ENCODE measurements at regions of chr17 and their contacts with region 1.

Region 1: GRCh38 chr17:32461853-32462617 is 17.7 kb downstream of the PSMD11 start:
- DNase-seq: peak; percentile 51
- ATAC-seq: peak; percentile 88
- H3K4me3 ChIP-seq: no peak overlapping the region
- H3K27ac ChIP-seq: no peak overlapping the region
- H3K4me1 ChIP-seq: peaks cover 4 to 5% of the 10 kb centered on the region in 2 experiments; a peak in 2 of 4 replicates
- H3K27me3 ChIP-seq: no peaks in the 10 kb centered on the region
- CTCF ChIP-seq: peak; percentile 53 to 78 (median 70)
- POLR2A ChIP-seq: no peak
- RAD21 ChIP-seq: peak; percentile 33; the same call in 1 of the 2 replicates

Region 2: GRCh38 chr17:32444308-32445073 is 17.5 kb before region 1 on chr17 and contains the start of gene PSMD11:
- CTCF ChIA-PET with region 1: interaction called, 30 read pairs
- POLR2A ChIA-PET with region 1: interaction called, 3 read pairs
- RAD21 ChIA-PET with region 1: no interaction called
- intact Hi-C with region 1: no loop called
- DNase-seq: peak; percentile 92
- ATAC-seq: peak; percentile 94
- H3K4me3 ChIP-seq: peak within 1 kb of the TSS; percentile 58 to 96
- H3K27ac ChIP-seq: peak within 1 kb of the TSS; percentile 88
- H3K4me1 ChIP-seq: peaks cover 11 to 22% of the 10 kb centered on the region in 2 experiments; a peak in 3 of 4 replicates
- H3K27me3 ChIP-seq: no peaks in the 10 kb centered on the region
- CTCF ChIP-seq: peak; percentile 73 to 92 (median 90); a peak in 4 of 6 replicates
- POLR2A ChIP-seq: no peak
- RAD21 ChIP-seq: peak; percentile 46
- total RNA-seq, gene PSMD11: 143 TPM

Region 3: DNA sequence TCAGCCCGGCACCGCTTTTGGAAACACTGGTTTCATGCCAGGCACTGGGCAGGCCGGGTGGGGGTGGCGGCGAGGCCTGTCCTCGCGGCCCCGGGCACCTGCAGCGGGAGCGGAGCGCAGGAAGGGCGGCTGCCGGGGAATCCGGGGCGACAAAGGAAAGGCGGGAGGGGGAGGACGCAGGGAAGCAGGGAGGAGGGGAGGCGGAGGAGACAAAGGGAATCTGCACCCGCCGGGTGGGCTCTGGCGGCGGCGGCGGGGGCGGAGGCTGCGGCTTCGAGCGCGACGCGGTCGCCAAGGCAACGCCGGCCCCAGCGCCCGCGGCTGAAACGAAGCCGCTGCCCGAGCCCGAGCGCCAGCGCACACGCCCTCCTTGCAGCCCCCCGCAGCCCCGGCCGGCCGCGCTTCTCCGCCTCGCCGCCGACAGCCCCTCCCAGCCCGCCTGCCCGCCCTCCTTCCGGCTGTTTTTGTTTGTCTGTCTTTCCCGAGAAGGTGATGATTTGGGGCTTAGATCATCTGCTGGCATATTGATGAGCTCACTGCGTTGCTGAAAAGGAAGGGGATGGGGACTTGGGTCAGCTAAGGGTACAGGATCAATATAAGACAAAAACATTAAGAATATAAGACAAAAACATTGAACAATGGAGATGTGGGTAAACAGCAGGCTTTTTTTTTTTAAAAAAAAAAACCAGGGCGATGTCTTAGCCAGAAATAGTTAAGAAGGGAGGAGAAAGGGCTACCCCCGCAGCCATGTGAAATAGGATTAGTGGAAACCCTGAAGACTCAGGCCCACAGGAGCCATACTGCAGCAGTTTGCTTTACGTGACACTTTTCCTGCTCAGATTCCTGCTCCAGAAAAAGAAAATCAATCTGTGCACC is 57.4 kb after region 1 on chr17:
- CTCF ChIA-PET with region 1: no interaction called
- POLR2A ChIA-PET with region 1: no interaction called
- RAD21 ChIA-PET with region 1: no interaction called
- intact Hi-C with region 1: loop called (anchors 10 kb)
- DNase-seq: no peak
- ATAC-seq: peak; percentile 89
- H3K4me3 ChIP-seq: peak overlapping the region; percentile 11 to 32; a peak in 3 of 4 replicates
- H3K27ac ChIP-seq: no peak overlapping the region
- H3K4me1 ChIP-seq: peaks cover 8 to 11% of the 10 kb centered on the region in 2 experiments
- H3K27me3 ChIP-seq: no peaks in the 10 kb centered on the region
- CTCF ChIP-seq: no peak
- POLR2A ChIP-seq: no peak
- RAD21 ChIP-seq: no peak

Region 4: DNA sequence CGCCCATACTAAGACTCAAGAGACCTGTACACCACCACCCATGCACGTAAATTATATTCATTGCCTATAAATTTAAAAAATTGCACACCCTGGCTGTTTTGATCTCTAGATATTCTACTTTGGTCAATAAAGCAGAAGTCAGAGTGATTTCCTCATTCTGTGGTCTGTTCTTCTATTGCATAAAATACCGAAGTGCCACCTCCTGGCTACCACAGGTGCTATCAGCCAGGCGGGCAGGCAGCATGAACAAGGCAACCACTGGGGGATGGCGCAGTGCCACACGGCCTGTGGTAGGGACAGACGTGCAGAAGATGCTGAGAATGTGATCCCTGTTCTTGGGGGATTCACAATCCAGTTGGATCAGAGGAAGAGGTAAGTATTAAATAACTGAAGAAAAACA is 147.1 kb after region 1 on chr17:
- CTCF ChIA-PET with region 1: no interaction called
- POLR2A ChIA-PET with region 1: no interaction called
- RAD21 ChIA-PET with region 1: no interaction called
- intact Hi-C with region 1: loop called (anchors 2 kb)
- DNase-seq: peak; percentile 31
- ATAC-seq: peak; percentile 100
- H3K4me3 ChIP-seq: no peak overlapping the region
- H3K27ac ChIP-seq: no peak overlapping the region
- H3K4me1 ChIP-seq: peaks cover 3 to 7% of the 10 kb centered on the region in 2 experiments; a peak in 2 of 4 replicates
- H3K27me3 ChIP-seq: no peaks in the 10 kb centered on the region
- CTCF ChIP-seq: peak; percentile 41 to 59 (median 50); a peak in 5 of 6 replicates
- POLR2A ChIP-seq: no peak
- RAD21 ChIP-seq: peak; percentile 60

Region 5: DNA sequence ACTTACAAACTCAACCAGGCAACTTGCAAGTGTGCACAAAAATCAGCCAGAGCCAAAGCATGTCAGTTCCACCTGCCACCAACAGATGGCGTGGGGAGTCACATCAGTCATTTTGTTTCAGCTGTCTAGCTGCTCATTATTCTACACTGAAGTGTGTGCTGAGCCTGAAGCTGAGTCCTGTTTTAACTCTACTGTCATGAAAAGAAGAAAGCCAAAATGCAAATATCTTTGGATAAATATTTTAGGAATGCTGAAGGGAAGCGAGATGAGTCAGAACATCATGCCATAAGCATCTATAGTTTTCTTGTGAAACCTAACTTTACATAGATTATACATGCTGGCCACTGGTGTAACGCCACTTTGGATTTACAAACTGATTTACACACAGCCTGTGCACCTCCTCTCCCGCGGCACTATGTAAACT is 197.4 kb after region 1 on chr17:
- CTCF ChIA-PET with region 1: no interaction called
- POLR2A ChIA-PET with region 1: no interaction called
- RAD21 ChIA-PET with region 1: no interaction called
- intact Hi-C with region 1: loop called (anchors 10 kb)
- DNase-seq: peak; percentile 35
- ATAC-seq: peak; percentile 84
- H3K4me3 ChIP-seq: no peak overlapping the region
- H3K27ac ChIP-seq: no peak overlapping the region
- H3K4me1 ChIP-seq: no peaks in the 10 kb centered on the region
- H3K27me3 ChIP-seq: no peaks in the 10 kb centered on the region
- CTCF ChIP-seq: peak; percentile 23 to 95 (median 89); a peak in 5 of 6 replicates
- POLR2A ChIP-seq: no peak
- RAD21 ChIP-seq: peak; percentile 45

Region 6: GRCh38 chr17:32755045-32755805 is 293.2 kb after region 1 on chr17:
- CTCF ChIA-PET with region 1: interaction called, 29 read pairs
- POLR2A ChIA-PET with region 1: no interaction called
- RAD21 ChIA-PET with region 1: no interaction called
- intact Hi-C with region 1: loop called (anchors 1 kb)
- DNase-seq: peak; percentile 52
- ATAC-seq: peak; percentile 84
- H3K4me3 ChIP-seq: no peak overlapping the region
- H3K27ac ChIP-seq: no peak overlapping the region
- H3K4me1 ChIP-seq: no peaks in the 10 kb centered on the region
- H3K27me3 ChIP-seq: no peaks in the 10 kb centered on the region
- CTCF ChIP-seq: peak; percentile 42 to 66 (median 61); a peak in 5 of 6 replicates
- POLR2A ChIP-seq: no peak
- RAD21 ChIP-seq: peak; percentile 72

Measured in HCT116 (cell line).